B cell (primary cell): ENCODE measurements at regions of chr19 and their contacts with region 1.

Region 1: GRCh38 chr19:49301165-49301865 is 23.7 kb downstream of the SLC6A16 start:
- DNase-seq: peak; percentile 89
- ATAC-seq: peak; percentile 98
- H3K4me3 ChIP-seq: peak overlapping the region in 4 of 5 experiments; percentile 11 to 51 (median 37)
- H3K4me3 Mint-ChIP-seq: peak overlapping the region; percentile 66
- H3K27ac ChIP-seq: no peak overlapping the region
- H3K27ac Mint-ChIP-seq: peak overlapping the region; percentile 20
- H3K4me1 ChIP-seq: peaks cover 10 to 14% of the 10 kb centered on the region in 2 donors
- H3K4me1 Mint-ChIP-seq: peaks cover 24% of the 10 kb centered on the region
- H3K27me3 ChIP-seq: no peaks in the 10 kb centered on the region
- H3K27me3 Mint-ChIP-seq: no peaks in the 10 kb centered on the region
- CTCF ChIP-seq: peak; percentile 90

Region 2: GRCh38 chr19:48970923-48971395 is 330.4 kb before region 1 on chr19:
- CTCF ChIA-PET with region 1: no interaction called
- POLR2A ChIA-PET with region 1: no interaction called
- intact Hi-C with region 1: no loop called
- DNase-seq: peak; percentile 91
- ATAC-seq: peak; percentile 89
- H3K4me3 ChIP-seq: no peak overlapping the region
- H3K4me3 Mint-ChIP-seq: no peak overlapping the region
- H3K27ac ChIP-seq: no peak overlapping the region
- H3K27ac Mint-ChIP-seq: peak overlapping the region; percentile 63
- H3K4me1 ChIP-seq: peaks cover 12 to 29% of the 10 kb centered on the region in 2 donors
- H3K4me1 Mint-ChIP-seq: peaks cover 34% of the 10 kb centered on the region
- H3K27me3 ChIP-seq: no peaks in the 10 kb centered on the region
- H3K27me3 Mint-ChIP-seq: no peaks in the 10 kb centered on the region
- CTCF ChIP-seq: peak; percentile 93

Region 3: GRCh38 chr19:49264258-49264657 is 37.1 kb before region 1 on chr19:
- CTCF ChIA-PET with region 1: interaction called, 12 read pairs
- POLR2A ChIA-PET with region 1: no interaction called
- intact Hi-C with region 1: no loop called
- DNase-seq: no peak
- ATAC-seq: no peak
- H3K4me3 ChIP-seq: no peak overlapping the region
- H3K4me3 Mint-ChIP-seq: no peak overlapping the region
- H3K27ac ChIP-seq: no peak overlapping the region
- H3K27ac Mint-ChIP-seq: no peak overlapping the region
- H3K4me1 ChIP-seq: no peaks in the 10 kb centered on the region
- H3K4me1 Mint-ChIP-seq: peaks cover 3% of the 10 kb centered on the region
- H3K27me3 ChIP-seq: no peaks in the 10 kb centered on the region
- H3K27me3 Mint-ChIP-seq: peaks cover 14% of the 10 kb centered on the region
- CTCF ChIP-seq: no peak

Region 4: DNA sequence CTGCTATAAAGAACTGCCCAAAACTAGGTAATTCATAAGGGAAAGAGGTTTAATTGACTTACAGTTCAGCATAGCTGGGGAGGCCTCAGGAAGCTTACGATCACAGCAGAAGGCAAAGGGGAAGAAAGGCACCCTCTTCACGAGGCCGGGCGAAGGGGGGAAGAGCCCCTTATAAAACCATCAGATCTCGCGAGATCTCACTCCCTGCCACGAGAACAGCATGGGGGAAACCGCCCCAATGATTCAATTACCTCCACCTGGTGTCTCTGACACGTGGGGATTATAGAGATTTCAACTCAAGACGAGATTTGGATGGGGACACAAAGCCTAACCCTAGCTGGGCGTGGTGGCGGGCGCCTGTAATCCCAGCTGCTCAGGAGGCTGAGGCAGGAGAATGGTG is 19.1 kb before region 1 on chr19:
- CTCF ChIA-PET with region 1: interaction called, 12 read pairs
- POLR2A ChIA-PET with region 1: interaction called, 5 read pairs
- intact Hi-C with region 1: no loop called
- DNase-seq: no peak
- ATAC-seq: no peak
- H3K4me3 ChIP-seq: no peak overlapping the region
- H3K4me3 Mint-ChIP-seq: no peak overlapping the region
- H3K27ac ChIP-seq: no peak overlapping the region
- H3K27ac Mint-ChIP-seq: no peak overlapping the region
- H3K4me1 ChIP-seq: no peaks in the 10 kb centered on the region
- H3K4me1 Mint-ChIP-seq: no peaks in the 10 kb centered on the region
- H3K27me3 ChIP-seq: peaks cover 0 to 6% (median 2%) of the 10 kb centered on the region in 4 experiments
- H3K27me3 Mint-ChIP-seq: peaks cover 7% of the 10 kb centered on the region
- CTCF ChIP-seq: no peak

Region 5: DNA sequence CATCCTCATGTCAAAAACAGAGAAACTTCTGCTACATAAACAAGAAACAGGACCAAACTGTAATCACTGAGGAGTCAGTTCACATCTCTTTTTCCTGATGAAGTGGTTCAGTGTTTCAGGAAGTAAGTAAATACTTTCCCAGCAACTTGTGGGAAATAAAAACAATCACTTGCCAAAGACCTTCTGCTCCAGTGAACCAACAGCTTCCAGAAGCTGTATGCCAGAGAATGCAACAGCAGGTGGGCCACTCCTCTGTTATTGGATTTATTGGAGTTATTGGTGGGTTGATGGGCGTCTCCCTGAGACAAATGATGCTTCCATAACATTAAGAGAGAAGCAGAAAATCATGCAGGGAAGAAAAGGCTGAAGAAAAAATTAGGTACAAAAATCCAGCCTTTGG is 13.8 kb after region 1 on chr19:
- CTCF ChIA-PET with region 1: interaction called, 12 read pairs
- POLR2A ChIA-PET with region 1: interaction called, 11 read pairs
- intact Hi-C with region 1: no loop called
- DNase-seq: no peak
- ATAC-seq: no peak
- H3K4me3 ChIP-seq: no peak overlapping the region
- H3K4me3 Mint-ChIP-seq: no peak overlapping the region
- H3K27ac ChIP-seq: no peak overlapping the region
- H3K27ac Mint-ChIP-seq: no peak overlapping the region
- H3K4me1 ChIP-seq: peaks cover 13 to 14% of the 10 kb centered on the region in 2 donors
- H3K4me1 Mint-ChIP-seq: peaks cover 46% of the 10 kb centered on the region
- H3K27me3 ChIP-seq: no peaks in the 10 kb centered on the region
- H3K27me3 Mint-ChIP-seq: no peaks in the 10 kb centered on the region
- CTCF ChIP-seq: no peak

Region 6: GRCh38 chr19:49443366-49444099 is 142.2 kb after region 1 on chr19:
- CTCF ChIA-PET with region 1: interaction called, 19 read pairs
- POLR2A ChIA-PET with region 1: interaction called, 6 read pairs
- intact Hi-C with region 1: loop called (anchors 2 kb)
- DNase-seq: peak; percentile 98
- ATAC-seq: peak; percentile 85
- H3K4me3 ChIP-seq: peak overlapping the region; percentile 12 to 80 (median 71)
- H3K4me3 Mint-ChIP-seq: peak overlapping the region; percentile 93
- H3K27ac ChIP-seq: peak overlapping the region; percentile 65 to 72
- H3K27ac Mint-ChIP-seq: peak overlapping the region; percentile 95
- H3K4me1 ChIP-seq: peaks cover 18 to 31% of the 10 kb centered on the region in 2 donors
- H3K4me1 Mint-ChIP-seq: peaks cover 35% of the 10 kb centered on the region
- H3K27me3 ChIP-seq: peaks cover 2 to 39% (median 34%) of the 10 kb centered on the region in 4 experiments
- H3K27me3 Mint-ChIP-seq: peaks cover 37% of the 10 kb centered on the region
- CTCF ChIP-seq: peak; percentile 89

Region 7: DNA sequence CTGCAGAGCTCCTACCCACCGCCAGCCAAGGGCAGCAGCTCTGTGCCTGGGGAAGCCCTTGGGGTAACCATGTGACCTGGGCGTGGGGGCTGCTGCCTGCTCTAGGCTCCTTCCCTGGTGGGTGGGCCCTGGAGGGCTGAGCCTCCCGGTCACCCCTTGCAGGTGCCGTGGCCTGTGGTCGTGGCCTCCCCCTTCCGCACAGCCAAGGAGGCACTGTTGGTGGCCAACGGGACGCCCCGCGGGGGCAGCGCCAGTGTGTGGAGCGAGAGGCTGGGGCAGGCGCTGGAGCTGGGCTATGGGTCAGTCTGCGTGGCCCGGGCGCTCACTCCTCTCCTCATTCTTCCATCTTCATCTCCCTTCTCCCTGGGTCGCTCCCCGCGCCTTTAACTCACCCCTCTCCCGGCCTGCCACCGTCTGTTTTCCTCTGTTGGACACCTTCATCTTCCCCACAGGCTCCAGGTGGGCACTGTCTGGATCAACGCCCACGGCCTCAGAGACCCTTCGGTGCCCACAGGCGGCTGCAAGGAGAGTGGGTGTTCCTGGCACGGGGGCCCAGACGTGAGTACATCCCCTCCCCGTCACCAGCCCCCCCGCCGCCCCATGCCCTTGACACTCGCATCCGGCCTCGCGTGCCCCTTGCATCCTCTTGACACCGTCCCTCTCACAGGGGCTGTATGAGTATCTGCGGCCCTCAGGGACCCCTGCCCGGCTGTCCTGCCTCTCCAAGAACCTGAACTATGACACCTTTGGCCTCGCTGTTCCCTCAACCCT is 162.8 kb after region 1 on chr19:
- CTCF ChIA-PET with region 1: no interaction called
- POLR2A ChIA-PET with region 1: no interaction called
- intact Hi-C with region 1: no loop called
- DNase-seq: no peak
- ATAC-seq: no peak
- H3K4me3 ChIP-seq: no peak overlapping the region
- H3K4me3 Mint-ChIP-seq: no peak overlapping the region
- H3K27ac ChIP-seq: no peak overlapping the region
- H3K27ac Mint-ChIP-seq: no peak overlapping the region
- H3K4me1 ChIP-seq: peaks cover 9 to 12% of the 10 kb centered on the region in 2 donors
- H3K4me1 Mint-ChIP-seq: peaks cover 10% of the 10 kb centered on the region
- H3K27me3 ChIP-seq: no peaks in the 10 kb centered on the region
- H3K27me3 Mint-ChIP-seq: no peaks in the 10 kb centered on the region
- CTCF ChIP-seq: no peak

Region 8: GRCh38 chr19:49555600-49556411 is 254.5 kb after region 1 on chr19:
- CTCF ChIA-PET with region 1: no interaction called
- POLR2A ChIA-PET with region 1: no interaction called
- intact Hi-C with region 1: no loop called
- DNase-seq: peak; percentile 41
- ATAC-seq: no peak
- H3K4me3 ChIP-seq: no peak overlapping the region
- H3K4me3 Mint-ChIP-seq: no peak overlapping the region
- H3K27ac ChIP-seq: no peak overlapping the region
- H3K27ac Mint-ChIP-seq: no peak overlapping the region
- H3K4me1 ChIP-seq: peaks cover 9 to 27% of the 10 kb centered on the region in 2 donors
- H3K4me1 Mint-ChIP-seq: peaks cover 28% of the 10 kb centered on the region
- H3K27me3 ChIP-seq: no peaks in the 10 kb centered on the region
- H3K27me3 Mint-ChIP-seq: no peaks in the 10 kb centered on the region
- CTCF ChIP-seq: no peak

Region 9: GRCh38 chr19:49746206-49747091 is 445.1 kb after region 1 on chr19:
- CTCF ChIA-PET with region 1: no interaction called
- POLR2A ChIA-PET with region 1: no interaction called
- intact Hi-C with region 1: no loop called
- DNase-seq: peak; percentile 59
- ATAC-seq: peak; percentile 56
- H3K4me3 ChIP-seq: no peak overlapping the region
- H3K4me3 Mint-ChIP-seq: no peak overlapping the region
- H3K27ac ChIP-seq: no peak overlapping the region
- H3K27ac Mint-ChIP-seq: peak overlapping the region; percentile 37
- H3K4me1 ChIP-seq: no peaks in the 10 kb centered on the region
- H3K4me1 Mint-ChIP-seq: no peaks in the 10 kb centered on the region
- H3K27me3 ChIP-seq: no peaks in the 10 kb centered on the region
- H3K27me3 Mint-ChIP-seq: no peaks in the 10 kb centered on the region
- CTCF ChIP-seq: no peak